ENCODE measurements at regions of chr17 and their contacts with region 1.

Region 1: GRCh38 chr17:57833179-57833939 is 16.5 kb downstream of the MRPS23 start:
- DNase-seq: peak; percentile 81
- H3K4me3 ChIP-seq: peak overlapping the region; percentile 11 to 63 (median 30)
- H3K27ac ChIP-seq: peak overlapping the region in 6 of 8 donors; percentile 32 to 73 (median 56)
- H3K4me1 ChIP-seq: peaks cover 6 to 21% (median 11%) of the 10 kb centered on the region in 6 donors
- H3K27me3 ChIP-seq: no peaks in the 10 kb centered on the region
- CTCF ChIP-seq: peak; percentile 65 to 86 (median 79)
- POLR2A ChIP-seq: no peak

Region 2: DNA sequence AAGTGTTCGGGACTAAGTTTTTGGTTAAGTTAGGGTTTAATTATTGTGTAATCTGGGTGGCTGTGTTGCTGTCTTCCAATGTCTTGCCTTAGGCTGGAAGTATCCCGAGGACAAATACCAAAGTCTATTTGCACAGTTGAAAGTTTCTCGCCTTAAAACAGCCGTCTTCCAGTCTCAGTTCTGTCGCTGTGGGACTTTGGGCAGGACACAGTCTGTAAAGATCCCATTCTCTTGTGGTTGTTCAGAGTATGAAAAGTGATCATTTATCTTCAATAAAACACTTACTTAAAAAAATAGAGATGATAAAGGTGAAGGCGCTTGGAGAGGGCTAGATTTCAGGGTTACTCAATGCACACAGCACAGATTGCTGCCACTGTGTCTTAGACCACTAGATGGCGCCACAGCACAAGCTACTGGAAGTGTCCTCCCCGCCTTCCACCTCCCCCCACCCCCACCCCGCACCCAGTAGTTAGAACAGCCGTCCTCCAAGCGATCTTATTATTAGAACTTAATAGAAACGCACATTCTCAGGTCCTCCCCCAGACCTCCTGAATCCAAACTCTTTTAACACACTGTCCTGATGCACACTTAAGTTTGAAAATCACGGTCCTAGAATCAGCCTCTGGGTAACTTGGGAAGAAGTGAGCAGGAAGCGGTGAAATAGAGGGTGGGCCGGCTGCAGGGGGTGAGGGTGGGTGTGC is 702.4 kb before region 1 on chr17:
- intact Hi-C with region 1: loop called (anchors 10 kb)
- DNase-seq: peak; percentile 89
- H3K4me3 ChIP-seq: peak overlapping the region in 1 of 8 donors; percentile 44
- H3K27ac ChIP-seq: no peak overlapping the region
- H3K4me1 ChIP-seq: peaks cover 0 to 11% (median 2%) of the 10 kb centered on the region in 6 donors
- H3K27me3 ChIP-seq: peaks cover 0 to 1% (median 0%) of the 10 kb centered on the region in 7 donors
- CTCF ChIP-seq: peak; percentile 49 to 93 (median 85)
- POLR2A ChIP-seq: no peak

Measured in spleen (tissue), 13 donors.